WTC11 (cell line): ENCODE measurements at regions of chrX and their contacts with region 1.

Region 1: DNA sequence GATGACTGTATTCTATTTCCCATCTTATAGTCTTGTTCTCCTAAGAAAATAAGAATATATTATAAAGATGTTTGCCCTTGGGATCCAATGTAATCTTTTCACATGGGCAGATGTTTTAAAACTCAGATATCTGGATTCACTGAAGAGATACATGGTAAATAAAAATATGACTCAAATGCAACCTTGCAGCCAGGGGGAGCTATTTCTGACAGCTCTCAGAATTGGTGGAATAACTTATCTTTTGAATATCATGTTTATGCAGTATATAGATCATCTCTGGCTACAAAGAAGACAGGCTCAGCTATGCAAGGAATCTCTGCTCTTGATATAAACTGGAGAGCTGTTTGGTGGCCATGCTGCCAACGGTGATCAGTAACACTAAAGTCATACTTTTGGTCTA is 274.7 kb downstream of the GLUD2 start:
- DNase-seq: no peak
- ATAC-seq: no peak
- H3K4me3 Mint-ChIP-seq: no peak overlapping the region
- H3K27ac Mint-ChIP-seq: no peak overlapping the region
- H3K4me1 Mint-ChIP-seq: no peaks in the 10 kb centered on the region
- H3K27me3 Mint-ChIP-seq: no peaks in the 10 kb centered on the region
- CTCF ChIP-seq: no peak

Region 2: DNA sequence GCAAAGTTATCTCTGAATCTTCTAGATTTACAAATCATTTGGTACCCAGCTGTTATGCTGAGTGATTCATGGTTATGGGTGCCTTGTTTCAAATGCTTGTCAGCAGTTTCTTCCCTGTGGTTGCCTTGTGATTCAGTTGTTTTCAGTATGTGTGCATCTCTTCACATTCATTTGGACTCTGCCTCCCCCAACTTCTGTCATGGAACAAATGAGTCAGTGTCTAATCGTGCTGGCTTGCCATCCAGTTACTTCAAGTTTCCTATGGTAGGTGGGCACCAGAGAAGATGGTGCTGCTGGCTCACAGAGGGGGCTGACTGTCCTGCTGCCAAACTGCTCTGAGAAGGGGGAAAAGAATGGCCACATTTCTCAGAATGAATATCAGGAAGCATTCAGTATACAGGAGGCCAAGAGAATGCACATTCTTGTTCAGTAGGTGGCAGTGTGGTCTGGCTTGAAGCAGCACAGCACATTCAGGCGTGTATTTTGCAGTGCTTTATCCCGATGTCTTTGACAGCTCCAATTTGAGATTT is 13.8 kb before region 1 on chrX:
- CTCF ChIA-PET with region 1: interaction called, 10 read pairs
- POLR2A ChIA-PET with region 1: no interaction called
- DNase-seq: peak; percentile 9
- ATAC-seq: peak; percentile 88
- H3K4me3 Mint-ChIP-seq: no peak overlapping the region
- H3K27ac Mint-ChIP-seq: no peak overlapping the region
- H3K4me1 Mint-ChIP-seq: peaks cover 3% of the 10 kb centered on the region; the same call in 1 of the 2 replicates
- H3K27me3 Mint-ChIP-seq: no peaks in the 10 kb centered on the region
- CTCF ChIP-seq: no peak

Region 3: DNA sequence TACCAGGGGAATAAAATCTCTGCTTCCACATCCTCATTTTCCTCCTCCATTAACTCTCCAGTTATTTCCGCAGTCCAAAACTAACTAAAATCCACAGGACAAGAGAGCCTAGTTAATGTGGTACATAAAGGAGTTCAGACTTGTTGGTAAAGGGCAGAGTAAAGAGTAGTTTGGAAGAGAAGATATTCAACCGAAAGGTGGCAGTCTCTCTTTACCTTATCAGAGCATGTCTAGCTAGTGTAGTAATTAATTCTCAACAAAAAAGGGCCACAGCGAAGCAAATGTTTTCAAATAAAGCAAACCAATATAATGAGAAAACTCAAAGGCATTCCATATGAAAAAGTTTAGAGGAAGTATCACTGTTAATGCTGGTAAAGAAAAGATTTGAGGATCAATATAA is 11.8 kb after region 1 on chrX:
- CTCF ChIA-PET with region 1: interaction called, 16 read pairs
- POLR2A ChIA-PET with region 1: no interaction called
- DNase-seq: no peak
- ATAC-seq: peak; percentile 76
- H3K4me3 Mint-ChIP-seq: no peak overlapping the region
- H3K27ac Mint-ChIP-seq: no peak overlapping the region
- H3K4me1 Mint-ChIP-seq: peaks cover 21% of the 10 kb centered on the region
- H3K27me3 Mint-ChIP-seq: no peaks in the 10 kb centered on the region
- CTCF ChIP-seq: no peak

Region 4: GRCh38 chrX:121356139-121356849 is 34.1 kb after region 1 on chrX:
- CTCF ChIA-PET with region 1: no interaction called
- POLR2A ChIA-PET with region 1: no interaction called
- DNase-seq: no peak
- ATAC-seq: no peak
- H3K4me3 Mint-ChIP-seq: no peak overlapping the region
- H3K27ac Mint-ChIP-seq: no peak overlapping the region
- H3K4me1 Mint-ChIP-seq: no peaks in the 10 kb centered on the region
- H3K27me3 Mint-ChIP-seq: no peaks in the 10 kb centered on the region
- CTCF ChIP-seq: no peak

Region 5: GRCh38 chrX:121504148-121504547 is 182.0 kb after region 1 on chrX:
- CTCF ChIA-PET with region 1: no interaction called
- POLR2A ChIA-PET with region 1: no interaction called
- DNase-seq: no peak
- ATAC-seq: no peak
- H3K4me3 Mint-ChIP-seq: no peak overlapping the region
- H3K27ac Mint-ChIP-seq: no peak overlapping the region
- H3K4me1 Mint-ChIP-seq: no peaks in the 10 kb centered on the region
- H3K27me3 Mint-ChIP-seq: no peaks in the 10 kb centered on the region
- CTCF ChIP-seq: no peak